WTC11 (cell line): ENCODE measurements at regions of chr7 and their contacts with region 1.

Region 1: DNA sequence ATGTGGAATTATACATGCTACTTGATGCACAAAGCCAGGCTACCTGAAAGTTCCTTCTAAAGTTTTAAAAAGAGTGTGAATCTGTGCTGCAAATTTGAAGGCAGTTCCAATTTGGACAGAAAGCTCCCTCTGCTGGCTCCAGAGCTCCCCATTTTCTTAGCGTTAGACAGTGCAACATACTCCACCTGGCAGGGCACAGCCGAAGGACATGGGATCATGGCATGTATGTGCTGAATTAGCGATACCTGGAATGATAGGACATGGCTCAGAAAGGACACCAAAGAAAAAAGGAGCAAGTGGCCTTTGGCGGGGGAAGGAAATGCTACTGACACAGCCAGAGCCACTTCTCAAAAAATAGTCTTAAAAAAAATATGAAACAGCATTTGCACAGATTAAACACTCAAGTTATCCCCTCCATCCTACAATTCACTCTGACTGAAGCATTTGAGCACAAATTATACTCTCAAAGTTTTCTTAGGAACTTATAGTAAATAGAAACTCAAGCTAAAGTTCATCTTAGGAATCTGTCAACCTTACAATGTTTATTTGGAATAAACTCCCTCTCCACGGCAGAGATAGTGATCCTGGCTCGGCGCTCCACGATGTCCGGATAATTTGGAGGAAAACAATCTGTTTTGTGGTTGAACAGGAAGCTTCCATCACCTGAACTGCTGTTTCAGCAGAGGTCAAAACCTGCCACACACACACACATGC is 80.0 kb downstream of the C7orf25 start:
- DNase-seq: peak; percentile 40
- ATAC-seq: peak; percentile 90
- H3K4me3 Mint-ChIP-seq: no peak overlapping the region
- H3K27ac Mint-ChIP-seq: no peak overlapping the region
- H3K4me1 Mint-ChIP-seq: peaks cover 38% of the 10 kb centered on the region
- H3K27me3 Mint-ChIP-seq: no peaks in the 10 kb centered on the region
- CTCF ChIP-seq: no peak

Region 2: GRCh38 chr7:42671627-42672026 is 160.2 kb before region 1 on chr7:
- CTCF ChIA-PET with region 1: no interaction called
- POLR2A ChIA-PET with region 1: interaction called, 10 read pairs
- DNase-seq: no peak
- ATAC-seq: no peak
- H3K4me3 Mint-ChIP-seq: no peak overlapping the region
- H3K27ac Mint-ChIP-seq: no peak overlapping the region
- H3K4me1 Mint-ChIP-seq: 0 out of 2 replicates have a peak, but pooled peaks cover 7% of the 10 kb centered on the region
- H3K27me3 Mint-ChIP-seq: no peaks in the 10 kb centered on the region
- CTCF ChIP-seq: no peak

Region 3: GRCh38 chr7:42812779-42813178 is 19.1 kb before region 1 on chr7:
- CTCF ChIA-PET with region 1: no interaction called
- POLR2A ChIA-PET with region 1: no interaction called
- DNase-seq: no peak
- ATAC-seq: no peak
- H3K4me3 Mint-ChIP-seq: no peak overlapping the region
- H3K27ac Mint-ChIP-seq: no peak overlapping the region
- H3K4me1 Mint-ChIP-seq: no peaks in the 10 kb centered on the region
- H3K27me3 Mint-ChIP-seq: no peaks in the 10 kb centered on the region
- CTCF ChIP-seq: no peak

Region 4: GRCh38 chr7:42907316-42907715 is 75.4 kb after region 1 on chr7:
- CTCF ChIA-PET with region 1: no interaction called
- POLR2A ChIA-PET with region 1: no interaction called
- DNase-seq: no peak
- ATAC-seq: no peak
- H3K4me3 Mint-ChIP-seq: no peak overlapping the region
- H3K27ac Mint-ChIP-seq: no peak overlapping the region
- H3K4me1 Mint-ChIP-seq: peaks cover 22% of the 10 kb centered on the region
- H3K27me3 Mint-ChIP-seq: no peaks in the 10 kb centered on the region; the same call in 1 of the 2 replicates
- CTCF ChIP-seq: no peak